Breast epithelium (tissue), 4 donors: ENCODE measurements at regions of chr20 and their contacts with region 1.

Region 1: GRCh38 chr20:24445510-24446170 is 23.8 kb upstream of the SYNDIG1 start:
- DNase-seq: no peak
- H3K4me3 ChIP-seq: no peak overlapping the region
- H3K27ac ChIP-seq: no peak overlapping the region
- H3K4me1 ChIP-seq: no peaks in the 10 kb centered on the region
- H3K27me3 ChIP-seq: peaks cover 0 to 12% of the 10 kb centered on the region in 2 donors
- CTCF ChIP-seq: no peak
- POLR2A ChIP-seq: no peak

Region 2: GRCh38 chr20:24194137-24194536 is 251.5 kb before region 1 on chr20:
- intact Hi-C with region 1: no loop called
- DNase-seq: no peak
- H3K4me3 ChIP-seq: no peak overlapping the region
- H3K27ac ChIP-seq: no peak overlapping the region
- H3K4me1 ChIP-seq: no peaks in the 10 kb centered on the region
- H3K27me3 ChIP-seq: no peaks in the 10 kb centered on the region
- CTCF ChIP-seq: no peak
- POLR2A ChIP-seq: no peak

Region 3: GRCh38 chr20:24483435-24484080 is 37.9 kb after region 1 on chr20:
- intact Hi-C with region 1: loop called (anchors 2 kb)
- DNase-seq: no peak
- H3K4me3 ChIP-seq: no peak overlapping the region
- H3K27ac ChIP-seq: no peak overlapping the region
- H3K4me1 ChIP-seq: no peaks in the 10 kb centered on the region
- H3K27me3 ChIP-seq: peaks cover 0 to 8% of the 10 kb centered on the region in 2 donors
- CTCF ChIP-seq: no peak
- POLR2A ChIP-seq: no peak

Region 4: DNA sequence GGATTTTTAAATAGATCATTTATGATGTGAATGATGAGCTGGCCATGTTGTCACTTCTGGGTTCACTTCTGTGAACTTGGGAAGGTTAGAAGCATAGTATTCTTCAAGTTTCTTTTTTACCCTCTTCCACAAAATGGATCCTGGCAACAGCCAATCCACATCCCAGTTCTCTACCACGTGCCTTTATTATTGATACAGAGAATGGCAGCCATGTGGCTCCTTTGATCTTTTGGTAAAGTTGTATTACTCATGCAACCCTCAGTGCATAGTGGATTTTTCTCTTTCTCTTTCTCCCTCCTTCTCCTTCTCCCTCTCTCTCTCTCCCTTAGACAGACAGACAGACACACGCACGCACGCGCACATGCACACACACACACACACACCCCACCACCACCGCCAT is 73.8 kb after region 1 on chr20:
- intact Hi-C with region 1: no loop called
- DNase-seq: no peak
- H3K4me3 ChIP-seq: no peak overlapping the region
- H3K27ac ChIP-seq: no peak overlapping the region
- H3K4me1 ChIP-seq: no peaks in the 10 kb centered on the region
- H3K27me3 ChIP-seq: no peaks in the 10 kb centered on the region
- CTCF ChIP-seq: no peak
- POLR2A ChIP-seq: no peak